BJ (cell line): ENCODE measurements at regions of chr11 and their contacts with region 1.

Region 1: DNA sequence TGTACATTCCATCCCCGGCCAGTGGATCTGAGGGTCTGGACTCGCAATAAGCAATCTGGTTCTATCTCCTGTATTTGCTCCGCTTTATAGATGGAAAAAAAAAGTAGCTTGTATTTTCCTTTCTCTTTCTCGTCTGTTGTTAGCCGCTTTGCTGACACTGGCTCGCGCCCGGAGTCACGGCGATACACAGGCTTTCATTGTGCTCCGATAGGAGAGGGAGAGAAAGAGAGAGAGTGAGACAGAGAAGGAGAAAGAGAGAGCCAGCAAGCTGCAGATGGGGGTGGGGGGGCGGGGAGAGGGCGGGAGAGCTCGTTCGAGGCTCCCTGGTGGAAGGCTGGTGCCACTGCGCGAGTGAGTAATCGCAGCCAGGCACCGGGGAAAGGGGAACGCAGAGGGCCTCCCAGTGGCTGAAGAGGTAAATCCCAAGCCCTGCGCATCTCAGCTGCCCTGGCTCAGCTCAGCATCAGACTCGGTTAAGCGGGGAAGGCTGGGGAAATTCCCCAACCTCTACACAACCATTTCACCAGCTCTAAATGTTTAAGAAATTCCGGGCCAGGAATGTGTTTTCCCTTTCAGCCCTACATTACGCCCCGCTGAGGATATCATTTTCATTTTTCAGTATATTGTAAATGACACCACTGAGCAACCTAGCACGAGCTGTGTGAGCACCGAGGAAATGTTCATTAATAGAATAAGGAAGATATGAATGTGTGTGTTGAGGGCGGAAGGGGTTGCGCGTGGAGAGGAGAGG is at the start of gene MAML2:
- DNase-seq: peak; percentile 46
- H3K4me3 ChIP-seq: peak within 1 kb of the TSS; percentile 74
- H3K27me3 ChIP-seq: no peaks in the 10 kb centered on the region
- CTCF ChIP-seq: peak; percentile 96
- polyA plus RNA-seq, gene MAML2: 20.5 and 22.0 TPM in 2 replicates

Region 2: DNA sequence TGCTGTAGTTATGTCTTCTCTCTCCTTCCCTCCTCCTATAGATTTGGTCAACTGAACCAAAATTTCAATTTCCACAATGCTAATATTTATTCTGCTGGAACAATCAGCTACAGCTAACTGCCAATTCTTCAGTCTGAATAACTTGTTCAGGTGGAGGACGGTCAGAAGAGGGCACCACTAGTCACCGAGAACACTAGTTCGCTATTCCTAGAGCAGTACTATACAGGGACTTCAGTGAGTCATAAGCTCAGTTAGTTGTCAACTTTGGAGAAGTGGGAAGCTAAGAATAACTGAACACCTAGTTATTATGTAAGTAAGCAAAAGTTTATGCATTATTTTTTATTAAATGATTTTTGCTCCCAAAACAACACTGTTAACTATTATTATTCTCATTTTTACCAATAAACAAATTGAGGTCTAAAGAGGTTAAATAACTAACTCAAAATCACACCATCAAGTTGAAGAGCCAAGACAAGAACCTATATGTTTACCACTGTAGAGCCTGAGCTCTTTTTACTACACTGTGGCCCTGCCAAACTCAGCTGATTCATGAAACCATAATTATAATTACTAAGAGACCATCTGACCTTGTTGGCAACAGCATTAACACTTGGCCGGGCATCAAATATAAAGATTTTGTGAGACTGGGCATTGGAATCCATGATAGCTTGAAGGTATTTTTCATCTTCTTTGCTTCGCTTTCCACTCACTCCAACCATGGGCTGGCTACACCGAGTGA is 493.9 kb before region 1 on chr11:
- CTCF ChIA-PET with region 1: interaction called, 17 read pairs
- POLR2A ChIA-PET with region 1: no interaction called
- DNase-seq: peak; percentile 27
- H3K4me3 ChIP-seq: no peak overlapping the region
- H3K27me3 ChIP-seq: no peaks in the 10 kb centered on the region
- CTCF ChIP-seq: peak; percentile 57

Region 3: GRCh38 chr11:96054870-96055705 is 288.0 kb before region 1 on chr11:
- CTCF ChIA-PET with region 1: interaction called, 46 read pairs
- POLR2A ChIA-PET with region 1: interaction called, 5 read pairs
- DNase-seq: no peak
- H3K4me3 ChIP-seq: no peak overlapping the region
- H3K27me3 ChIP-seq: no peaks in the 10 kb centered on the region
- CTCF ChIP-seq: peak; percentile 62

Region 4: DNA sequence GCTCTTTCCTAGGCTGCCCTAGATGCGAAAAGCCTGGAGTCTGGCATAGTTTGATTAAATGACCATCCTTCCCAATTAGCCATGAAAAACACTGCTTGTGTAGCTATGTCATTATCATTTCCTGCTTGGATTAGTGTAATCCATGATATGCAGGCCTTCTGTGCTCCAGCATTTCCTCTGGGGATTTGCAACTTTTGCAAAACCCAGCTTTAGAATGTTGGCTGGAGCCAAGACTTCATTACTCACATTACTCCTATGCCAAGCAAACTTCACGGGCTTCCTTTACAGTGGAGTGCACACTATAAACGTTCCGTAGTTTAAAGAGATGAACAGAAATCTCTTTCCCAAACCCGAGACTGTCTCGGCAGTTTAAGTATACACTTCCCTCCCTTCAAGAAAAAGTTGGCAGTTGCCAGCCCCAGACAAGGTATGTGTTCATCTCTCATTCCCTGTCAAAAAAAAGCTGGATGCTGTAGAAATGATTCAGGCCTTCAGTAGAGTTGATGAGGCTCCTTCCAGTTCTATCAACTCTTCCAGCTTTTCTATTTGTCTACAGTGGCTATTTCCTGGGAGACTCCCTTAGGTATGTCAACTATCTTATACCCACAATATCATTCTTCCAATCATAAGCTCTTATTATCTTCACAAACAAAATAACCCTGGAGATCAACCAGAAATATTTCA is 180.2 kb before region 1 on chr11:
- CTCF ChIA-PET with region 1: interaction called, 10 read pairs
- POLR2A ChIA-PET with region 1: no interaction called
- DNase-seq: no peak
- H3K4me3 ChIP-seq: no peak overlapping the region
- H3K27me3 ChIP-seq: no peaks in the 10 kb centered on the region
- CTCF ChIP-seq: no peak

Region 5: GRCh38 chr11:96235751-96236150 is 107.4 kb before region 1 on chr11:
- CTCF ChIA-PET with region 1: interaction called, 37 read pairs
- POLR2A ChIA-PET with region 1: no interaction called
- DNase-seq: no peak
- H3K4me3 ChIP-seq: no peak overlapping the region
- H3K27me3 ChIP-seq: no peaks in the 10 kb centered on the region
- CTCF ChIP-seq: no peak

Region 6: GRCh38 chr11:96263361-96263763 is 79.8 kb before region 1 on chr11:
- CTCF ChIA-PET with region 1: interaction called, 13 read pairs
- POLR2A ChIA-PET with region 1: no interaction called
- DNase-seq: peak; percentile 82
- H3K4me3 ChIP-seq: no peak overlapping the region
- H3K27me3 ChIP-seq: no peaks in the 10 kb centered on the region
- CTCF ChIP-seq: no peak

Region 7: DNA sequence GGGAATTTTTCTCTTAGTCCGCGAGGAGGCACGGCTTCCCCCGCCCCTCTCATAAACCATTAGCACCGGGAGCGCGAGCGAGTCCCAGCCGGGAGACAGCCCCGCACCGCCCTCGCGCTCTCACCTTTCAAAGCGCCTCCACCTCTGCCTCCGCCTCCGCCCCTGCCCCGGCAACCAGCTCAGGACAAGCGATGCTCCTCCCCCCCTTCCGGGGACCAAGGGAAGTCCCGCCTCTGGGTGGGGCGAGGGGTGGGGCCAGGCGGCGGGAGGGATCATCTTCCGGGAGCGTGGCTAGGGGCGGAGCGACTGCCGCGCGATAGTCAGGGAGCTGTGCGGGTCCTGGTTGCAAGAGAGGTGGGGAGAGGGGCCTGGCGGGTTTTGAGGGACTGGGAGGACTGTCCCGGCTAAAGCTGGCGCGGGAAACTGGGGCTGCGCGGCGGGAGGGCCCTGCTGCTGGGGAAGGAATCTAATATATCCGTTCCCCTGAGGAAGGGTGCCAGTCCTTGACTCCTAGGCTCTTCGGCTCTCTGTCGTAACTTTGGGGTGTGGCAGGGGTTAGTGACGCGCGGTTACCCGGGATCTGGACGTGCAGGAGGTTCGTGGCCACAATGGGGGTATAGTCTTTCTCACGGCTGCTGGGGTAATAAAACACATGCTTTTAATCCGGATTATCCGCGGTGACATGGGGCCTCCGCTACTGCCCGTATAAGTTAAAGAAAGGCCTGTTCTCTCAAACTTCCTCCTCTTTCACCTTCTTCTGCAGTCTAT is 46.8 kb after region 1 on chr11 and contains the starts of genes CCDC82 and JRKL:
- CTCF ChIA-PET with region 1: interaction called, 13 read pairs
- POLR2A ChIA-PET with region 1: no interaction called
- DNase-seq: peak; percentile 64
- H3K4me3 ChIP-seq: peak within 1 kb of the TSS; percentile 97
- H3K27me3 ChIP-seq: no peaks in the 10 kb centered on the region
- CTCF ChIP-seq: no peak
- polyA plus RNA-seq, gene CCDC82: 4.6 and 10.6 TPM in 2 replicates
- polyA plus RNA-seq, gene JRKL: 2.9 and 6.8 TPM in 2 replicates